ENCODE measurements at regions of chr17 and their contacts with region 1.

Region 1: GRCh38 chr17:16363749-16364536 is 10.7 kb upstream of the CENPV start:
- DNase-seq: no peak
- H3K4me3 ChIP-seq: no peak overlapping the region
- H3K27me3 ChIP-seq: no peaks in the 10 kb centered on the region
- CTCF ChIP-seq: peak; percentile 95

Region 2: GRCh38 chr17:16342979-16343378 is 21.0 kb before region 1 on chr17:
- CTCF ChIA-PET with region 1: interaction called, 89 read pairs
- POLR2A ChIA-PET with region 1: no interaction called
- DNase-seq: no peak
- H3K4me3 ChIP-seq: no peak overlapping the region
- H3K27me3 ChIP-seq: no peaks in the 10 kb centered on the region
- CTCF ChIP-seq: no peak

Region 3: GRCh38 chr17:16353317-16354174 is 10.4 kb before region 1 on chr17 and contains the start of gene CENPV:
- CTCF ChIA-PET with region 1: interaction called, 89 read pairs
- POLR2A ChIA-PET with region 1: interaction called, 11 read pairs
- DNase-seq: no peak
- H3K4me3 ChIP-seq: peak within 1 kb of the TSS; percentile 74
- H3K27me3 ChIP-seq: no peaks in the 10 kb centered on the region
- CTCF ChIP-seq: no peak
- polyA plus RNA-seq, gene CENPV: 39.2 and 41.5 TPM in 2 replicates

Region 4: GRCh38 chr17:16380640-16381495 is 16.9 kb after region 1 on chr17 and contains the start of gene UBB:
- CTCF ChIA-PET with region 1: interaction called, 89 read pairs
- POLR2A ChIA-PET with region 1: no interaction called
- DNase-seq: peak; percentile 88
- H3K4me3 ChIP-seq: peak within 1 kb of the TSS; percentile 74
- H3K27me3 ChIP-seq: no peaks in the 10 kb centered on the region
- CTCF ChIP-seq: 0 out of 2 replicates have a peak, but pooled peaks have one; percentile 22
- polyA plus RNA-seq, gene UBB: 3,195 and 3,417 TPM in 2 replicates

Region 5: DNA sequence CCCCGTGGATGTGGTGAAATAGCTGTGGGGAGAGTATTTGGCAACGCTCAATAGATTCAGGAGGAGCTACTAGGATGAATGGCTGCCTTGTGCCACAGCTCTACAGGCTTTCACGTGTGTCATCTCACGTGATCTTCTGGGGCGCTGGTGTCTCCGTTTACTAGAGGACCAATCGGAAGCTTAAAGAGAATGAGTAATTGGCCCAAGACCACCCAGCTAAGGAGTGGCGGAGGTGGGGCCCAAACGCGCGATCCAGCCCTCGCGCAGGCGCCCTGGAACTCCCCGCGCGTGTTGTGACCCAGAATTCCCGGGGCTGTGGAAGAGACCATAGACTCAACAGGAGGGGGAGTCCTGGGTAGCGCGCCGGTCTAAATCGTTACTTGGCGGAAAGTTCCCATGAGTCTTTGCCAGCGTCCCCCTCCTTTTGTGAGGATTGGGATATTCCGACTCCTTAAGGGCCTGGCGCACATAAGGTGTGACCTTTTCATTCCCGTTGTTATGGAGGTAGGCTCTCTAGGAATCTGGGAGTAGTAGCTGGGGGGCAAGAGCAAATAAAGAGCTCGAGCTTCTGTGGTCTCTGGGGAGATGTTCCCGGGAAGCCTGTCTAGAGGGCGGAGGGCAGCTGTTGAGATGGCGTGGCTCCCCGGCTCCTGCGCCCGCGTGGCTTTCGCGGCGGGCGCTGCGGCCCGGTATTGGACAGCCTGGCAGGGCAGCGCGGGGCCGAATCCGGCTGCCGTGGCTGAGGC is 74.8 kb after region 1 on chr17:
- CTCF ChIA-PET with region 1: interaction called, 13 read pairs
- POLR2A ChIA-PET with region 1: interaction called, 4 read pairs
- DNase-seq: peak; percentile 99
- H3K4me3 ChIP-seq: peak overlapping the region; percentile 94
- H3K27me3 ChIP-seq: no peaks in the 10 kb centered on the region
- CTCF ChIP-seq: no peak

Region 6: GRCh38 chr17:16521070-16521727 is 157.3 kb after region 1 on chr17:
- CTCF ChIA-PET with region 1: interaction called, 38 read pairs
- POLR2A ChIA-PET with region 1: no interaction called
- DNase-seq: peak; percentile 45
- H3K4me3 ChIP-seq: no peak overlapping the region
- H3K27me3 ChIP-seq: peaks cover 5% of the 10 kb centered on the region
- CTCF ChIP-seq: peak; percentile 89

Measured in BJ (cell line).